ENCODE measurements at regions of chr17 and their contacts with region 1.

Region 1: DNA sequence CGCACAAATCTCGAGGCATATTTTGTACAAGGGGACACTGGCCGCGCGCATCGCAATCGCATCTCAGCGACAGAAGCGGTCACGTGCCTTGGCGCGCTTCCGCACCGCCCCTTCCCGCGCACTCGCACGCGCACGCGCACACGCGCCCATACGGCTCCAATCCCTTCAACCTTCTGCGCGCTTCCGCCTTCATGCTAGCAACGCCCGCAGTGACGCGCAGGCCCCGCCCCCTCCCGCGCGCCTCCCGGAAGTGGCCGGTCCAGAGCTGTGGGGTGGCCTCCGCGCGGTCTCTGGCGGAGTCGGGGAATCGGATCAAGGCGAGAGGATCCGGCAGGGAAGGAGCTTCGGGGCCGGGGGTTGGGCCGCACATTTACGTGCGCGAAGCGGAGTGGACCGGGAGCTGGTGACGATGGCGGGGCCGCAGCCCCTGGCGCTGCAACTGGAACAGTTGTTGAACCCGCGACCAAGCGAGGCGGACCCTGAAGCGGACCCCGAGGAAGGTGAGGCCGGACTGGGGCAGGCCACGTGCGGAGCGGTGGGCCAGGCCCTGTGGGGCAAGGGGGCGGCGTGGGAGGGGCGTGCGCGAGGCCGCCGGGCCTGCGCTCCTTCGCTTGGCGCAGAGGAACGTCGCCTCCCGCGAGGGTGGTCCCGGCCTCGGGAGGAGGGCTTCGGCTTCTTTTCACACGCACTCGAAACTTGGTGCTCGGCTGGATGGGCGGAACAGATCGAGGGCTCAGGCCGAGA is at the start of gene AATF:
- DNase-seq: peak; percentile 94
- ATAC-seq: peak; percentile 97
- H3K4me3 ChIP-seq: peak within 1 kb of the TSS; percentile 55
- H3K27ac ChIP-seq: peak within 1 kb of the TSS; percentile 78
- H3K4me1 ChIP-seq: peaks cover 3% of the 10 kb centered on the region
- H3K27me3 ChIP-seq: peaks cover 37% of the 10 kb centered on the region
- CTCF ChIP-seq: no peak
- POLR2A ChIP-seq: peak; percentile 86
- RAD21 ChIP-seq: no peak
- total RNA-seq, gene AATF: 34.8 and 37.2 TPM in 2 replicates

Region 2: GRCh38 chr17:36812762-36813161 is 136.1 kb before region 1 on chr17:
- CTCF ChIA-PET with region 1: no interaction called
- POLR2A ChIA-PET with region 1: no interaction called
- dilution Hi-C with region 1: no loop called
- in situ Hi-C with region 1: no loop called
- intact Hi-C with region 1: no loop called
- DNase-seq: no peak
- ATAC-seq: no peak
- H3K4me3 ChIP-seq: no peak overlapping the region
- H3K27ac ChIP-seq: no peak overlapping the region
- H3K4me1 ChIP-seq: no peaks in the 10 kb centered on the region
- H3K27me3 ChIP-seq: peaks cover 74% of the 10 kb centered on the region
- CTCF ChIP-seq: no peak
- POLR2A ChIP-seq: no peak
- RAD21 ChIP-seq: no peak

Region 3: GRCh38 chr17:36921095-36921851 is 27.6 kb before region 1 on chr17:
- CTCF ChIA-PET with region 1: no interaction called
- POLR2A ChIA-PET with region 1: no interaction called
- dilution Hi-C with region 1: no loop called
- in situ Hi-C with region 1: no loop called
- intact Hi-C with region 1: no loop called
- DNase-seq: peak; percentile 61
- ATAC-seq: no peak
- H3K4me3 ChIP-seq: no peak overlapping the region
- H3K27ac ChIP-seq: no peak overlapping the region
- H3K4me1 ChIP-seq: no peaks in the 10 kb centered on the region
- H3K27me3 ChIP-seq: peaks cover 54% of the 10 kb centered on the region
- CTCF ChIP-seq: no peak
- POLR2A ChIP-seq: no peak
- RAD21 ChIP-seq: no peak

Region 4: DNA sequence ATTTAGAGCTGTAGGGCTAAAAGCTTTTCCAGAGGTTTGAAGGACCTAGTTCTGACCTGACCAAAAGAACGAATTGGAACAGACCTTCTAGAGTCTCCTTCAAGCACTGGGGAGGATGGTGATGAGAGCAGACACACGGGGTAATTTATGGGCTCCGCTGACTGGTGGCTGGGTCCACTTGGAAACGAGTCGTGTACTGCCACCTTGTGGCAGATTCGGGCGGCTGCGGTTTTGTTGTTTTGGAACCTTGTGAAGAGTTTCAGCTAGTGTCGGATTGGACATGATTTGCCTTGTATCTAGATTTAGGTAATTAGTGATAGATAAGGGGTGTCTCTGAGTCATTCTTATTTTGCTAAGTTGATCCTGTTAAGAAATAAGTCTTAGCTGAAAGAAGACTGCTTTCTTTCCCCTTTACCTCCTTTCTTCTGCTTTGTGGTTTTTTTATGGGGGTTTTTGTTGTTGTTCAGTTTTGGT is 98.8 kb after region 1 on chr17:
- CTCF ChIA-PET with region 1: interaction called, 4 read pairs
- POLR2A ChIA-PET with region 1: no interaction called
- dilution Hi-C with region 1: no loop called
- in situ Hi-C with region 1: no loop called
- intact Hi-C with region 1: loop called (anchors 5 kb)
- DNase-seq: peak; percentile 80
- ATAC-seq: peak; percentile 86
- H3K4me3 ChIP-seq: no peak overlapping the region
- H3K27ac ChIP-seq: no peak overlapping the region
- H3K4me1 ChIP-seq: peaks cover 2% of the 10 kb centered on the region
- H3K27me3 ChIP-seq: no peaks in the 10 kb centered on the region
- CTCF ChIP-seq: peak; percentile 88
- POLR2A ChIP-seq: no peak
- RAD21 ChIP-seq: peak; percentile 86

Region 5: GRCh38 chr17:37062021-37062420 is 113.1 kb after region 1 on chr17:
- CTCF ChIA-PET with region 1: no interaction called
- POLR2A ChIA-PET with region 1: no interaction called
- dilution Hi-C with region 1: no loop called
- in situ Hi-C with region 1: no loop called
- intact Hi-C with region 1: no loop called
- DNase-seq: no peak
- ATAC-seq: no peak
- H3K4me3 ChIP-seq: no peak overlapping the region
- H3K27ac ChIP-seq: no peak overlapping the region
- H3K4me1 ChIP-seq: peaks cover 3% of the 10 kb centered on the region; the same call in 1 of the 2 replicates
- H3K27me3 ChIP-seq: peaks cover 29% of the 10 kb centered on the region
- CTCF ChIP-seq: no peak
- POLR2A ChIP-seq: no peak
- RAD21 ChIP-seq: no peak

Region 6: DNA sequence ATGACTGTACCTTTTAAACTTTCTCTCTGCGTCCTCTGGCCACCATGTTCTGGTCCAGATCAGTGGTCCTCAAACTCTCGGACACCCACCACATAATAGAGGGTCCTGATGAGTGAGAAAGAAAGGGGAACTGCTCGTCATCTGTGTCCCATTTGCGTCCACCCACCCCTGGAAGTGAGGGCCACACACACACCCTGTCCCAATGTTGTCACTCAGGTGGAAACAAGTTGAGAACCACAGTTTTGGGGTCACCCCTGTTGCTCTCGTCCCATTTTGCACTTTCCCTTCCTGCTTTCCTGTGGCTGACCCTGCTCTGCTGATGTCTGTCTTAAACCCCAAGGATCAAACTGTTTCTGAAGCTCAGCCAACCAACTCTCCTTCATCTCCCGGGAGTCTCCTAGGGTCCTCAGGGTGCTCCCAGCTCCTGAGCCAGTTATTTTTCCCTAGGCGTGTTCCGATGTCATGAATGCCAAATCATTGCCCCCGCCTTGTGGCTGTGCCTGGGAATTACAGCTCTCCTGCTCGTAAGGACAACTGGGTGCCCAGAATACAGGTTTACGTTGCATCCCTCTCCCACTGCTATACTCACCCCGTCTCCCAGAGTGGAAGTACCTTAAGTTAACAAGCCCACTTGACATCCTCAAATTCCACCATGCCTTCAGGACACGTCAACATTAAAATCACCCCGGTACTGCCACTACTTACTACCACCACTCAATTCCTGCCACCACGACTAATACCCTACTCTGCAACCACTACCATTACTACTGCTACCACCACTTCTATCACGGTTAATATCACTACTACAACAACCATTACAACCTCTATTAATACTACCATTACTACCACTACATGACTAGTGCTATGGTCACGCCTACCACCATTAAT is 822.0 kb after region 1 on chr17:
- CTCF ChIA-PET with region 1: no interaction called
- POLR2A ChIA-PET with region 1: no interaction called
- dilution Hi-C with region 1: no loop called
- in situ Hi-C with region 1: no loop called
- intact Hi-C with region 1: no loop called
- DNase-seq: peak; percentile 62
- ATAC-seq: peak; percentile 92
- H3K4me3 ChIP-seq: no peak overlapping the region
- H3K27ac ChIP-seq: no peak overlapping the region
- H3K4me1 ChIP-seq: 0 out of 2 replicates have a peak, but pooled peaks cover 2% of the 10 kb centered on the region
- H3K27me3 ChIP-seq: no peaks in the 10 kb centered on the region
- CTCF ChIP-seq: peak; percentile 80
- POLR2A ChIP-seq: no peak
- RAD21 ChIP-seq: peak; percentile 85